CD8-positive, alpha-beta T cell (primary cell): ENCODE measurements at regions of chr15 and their contacts with region 1.

Region 1: DNA sequence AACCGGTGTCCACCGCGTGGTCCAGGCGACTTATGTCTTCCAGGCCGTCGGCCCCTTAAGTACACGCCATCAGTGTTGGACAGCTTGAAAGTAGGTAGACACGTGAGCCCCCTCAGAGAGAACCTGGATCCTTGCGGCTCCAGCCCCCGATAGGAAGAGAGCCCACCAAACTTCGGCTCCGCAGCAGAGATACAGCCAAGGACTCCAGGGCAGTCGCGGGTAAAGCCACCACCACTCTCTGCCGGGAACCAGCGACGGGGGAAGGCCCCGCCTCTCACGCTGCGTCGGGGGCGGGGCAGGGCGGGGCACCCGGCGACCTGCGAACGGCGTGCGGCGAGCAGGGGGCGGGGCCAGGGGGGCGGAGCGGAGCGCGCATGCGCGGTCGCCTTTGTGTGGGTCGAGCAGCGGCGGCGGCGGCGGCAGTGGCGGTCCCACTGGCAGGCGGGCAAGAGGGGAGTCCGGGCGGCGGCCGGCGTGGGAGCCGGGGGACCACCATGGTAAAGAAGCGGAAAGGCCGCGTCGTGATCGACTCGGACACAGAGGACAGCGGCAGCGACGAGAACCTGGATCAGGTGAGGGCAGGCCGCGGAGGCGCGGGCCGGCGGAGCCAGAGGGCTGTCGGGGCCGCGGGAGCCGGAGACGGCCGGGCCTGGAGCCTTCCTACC is at the start of gene RTF1:
- DNase-seq: peak; percentile 94 to 99 (median 98)
- ATAC-seq: peak; percentile 98
- H3K4me3 ChIP-seq: peak within 1 kb of the TSS; percentile 79 to 91
- H3K4me3 Mint-ChIP-seq: peak within 1 kb of the TSS; percentile 93
- H3K27ac ChIP-seq: peak within 1 kb of the TSS; percentile 64 to 76
- H3K27ac Mint-ChIP-seq: peak within 1 kb of the TSS; percentile 94
- H3K4me1 ChIP-seq: peaks cover 30% of the 10 kb centered on the region
- H3K4me1 Mint-ChIP-seq: peaks cover 43% of the 10 kb centered on the region
- H3K27me3 ChIP-seq: no peaks in the 10 kb centered on the region
- H3K27me3 Mint-ChIP-seq: no peaks in the 10 kb centered on the region
- CTCF ChIP-seq: no peak
- total RNA-seq, gene RTF1: 33.2 to 41.6 TPM

Region 2: DNA sequence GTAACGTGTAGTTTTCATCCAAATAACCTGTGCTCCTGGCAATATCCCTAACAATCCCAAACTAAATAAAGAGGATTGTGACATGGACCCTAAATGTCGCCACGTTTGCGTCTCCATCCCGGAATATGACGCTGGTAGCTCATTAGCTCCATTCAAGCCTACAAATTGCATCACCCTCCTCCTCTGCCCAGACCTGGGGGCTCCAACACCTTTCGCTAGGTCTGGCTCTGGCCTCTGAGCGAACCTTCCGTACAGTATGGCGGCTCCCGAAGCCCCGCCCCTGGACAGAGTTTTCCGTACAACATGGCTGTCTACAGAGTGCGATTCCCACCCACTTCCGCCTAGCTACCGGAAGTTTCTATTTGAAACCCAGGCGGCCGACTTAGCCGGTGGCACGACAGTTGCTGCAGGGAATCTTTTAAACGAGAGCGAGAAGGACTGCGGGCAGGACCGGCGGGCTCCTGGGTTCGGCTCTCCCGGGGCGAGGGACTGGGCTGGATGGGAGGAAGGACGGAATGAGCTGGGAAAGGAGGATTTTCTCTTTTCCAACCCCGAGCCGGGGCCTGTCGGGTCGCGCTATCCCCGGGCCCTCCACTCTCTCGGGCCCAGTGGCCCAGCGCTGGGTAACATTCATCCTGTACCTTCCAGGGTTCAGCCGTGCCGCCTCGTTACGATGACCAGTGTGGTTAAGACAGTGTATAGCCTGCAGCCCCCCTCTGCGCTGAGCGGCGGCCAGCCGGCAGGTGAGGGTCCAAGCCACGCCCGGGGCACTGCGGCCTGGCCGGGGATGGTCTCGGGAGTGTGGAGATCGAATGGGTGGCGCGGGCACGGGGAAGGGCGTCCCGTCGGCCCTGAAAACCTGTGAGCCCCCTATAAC is 1034.1 kb before region 1 on chr15 and contains the start of gene KNSTRN:
- CTCF ChIA-PET with region 1: no interaction called
- POLR2A ChIA-PET with region 1: no interaction called
- intact Hi-C with region 1: loop called in 1 of 2 experiments (anchors 5 kb)
- DNase-seq: peak; percentile 84 to 95 (median 93)
- ATAC-seq: peak; percentile 99
- H3K4me3 ChIP-seq: peak within 1 kb of the TSS; percentile 73 to 93
- H3K4me3 Mint-ChIP-seq: peak within 1 kb of the TSS; percentile 99
- H3K27ac ChIP-seq: peak within 1 kb of the TSS in 1 of 2 experiments; percentile 54
- H3K27ac Mint-ChIP-seq: peak within 1 kb of the TSS; percentile 81
- H3K4me1 ChIP-seq: peaks cover 13% of the 10 kb centered on the region
- H3K4me1 Mint-ChIP-seq: peaks cover 16% of the 10 kb centered on the region
- H3K27me3 ChIP-seq: no peaks in the 10 kb centered on the region
- H3K27me3 Mint-ChIP-seq: no peaks in the 10 kb centered on the region
- CTCF ChIP-seq: no peak
- total RNA-seq, gene KNSTRN: 3.8 to 5.4 TPM

Region 3: GRCh38 chr15:41230650-41231533 is 186.0 kb before region 1 on chr15 and contains the starts of genes CHP1 and EXD1:
- CTCF ChIA-PET with region 1: no interaction called
- POLR2A ChIA-PET with region 1: no interaction called
- intact Hi-C with region 1: loop called in 1 of 2 experiments (anchors 2 kb)
- DNase-seq: peak; percentile 89 to 97 (median 94)
- ATAC-seq: peak; percentile 95
- H3K4me3 ChIP-seq: peak within 1 kb of the TSS; percentile 83 to 89
- H3K4me3 Mint-ChIP-seq: peak within 1 kb of the TSS; percentile 89
- H3K27ac ChIP-seq: peak within 1 kb of the TSS; percentile 74 to 85
- H3K27ac Mint-ChIP-seq: peak within 1 kb of the TSS; percentile 90
- H3K4me1 ChIP-seq: peaks cover 27% of the 10 kb centered on the region
- H3K4me1 Mint-ChIP-seq: peaks cover 37% of the 10 kb centered on the region
- H3K27me3 ChIP-seq: no peaks in the 10 kb centered on the region
- H3K27me3 Mint-ChIP-seq: no peaks in the 10 kb centered on the region
- CTCF ChIP-seq: peak; percentile 99
- total RNA-seq, gene CHP1: 25.6 to 28.9 TPM
- total RNA-seq, gene EXD1: not detected

Region 4: GRCh38 chr15:41331833-41332787 is 84.8 kb before region 1 on chr15 and contains the start of gene OIP5:
- CTCF ChIA-PET with region 1: no interaction called
- POLR2A ChIA-PET with region 1: no interaction called
- intact Hi-C with region 1: loop called (anchors 1 kb)
- DNase-seq: peak; percentile 95 to 100 (median 96)
- ATAC-seq: peak; percentile 96
- H3K4me3 ChIP-seq: peak within 1 kb of the TSS; percentile 84 to 94
- H3K4me3 Mint-ChIP-seq: peak within 1 kb of the TSS; percentile 97
- H3K27ac ChIP-seq: peak within 1 kb of the TSS; percentile 46 to 63
- H3K27ac Mint-ChIP-seq: peak within 1 kb of the TSS; percentile 87
- H3K4me1 ChIP-seq: peaks cover 14% of the 10 kb centered on the region
- H3K4me1 Mint-ChIP-seq: peaks cover 30% of the 10 kb centered on the region
- H3K27me3 ChIP-seq: no peaks in the 10 kb centered on the region
- H3K27me3 Mint-ChIP-seq: no peaks in the 10 kb centered on the region
- CTCF ChIP-seq: peak; percentile 58
- total RNA-seq, gene OIP5: not detected

Region 5: GRCh38 chr15:41493205-41493901 is 76.5 kb after region 1 on chr15 and contains the start of gene ITPKA:
- CTCF ChIA-PET with region 1: no interaction called
- POLR2A ChIA-PET with region 1: no interaction called
- intact Hi-C with region 1: loop called (anchors 2 to 5 kb)
- DNase-seq: peak; percentile 38 to 87 (median 74)
- ATAC-seq: peak; percentile 82
- H3K4me3 ChIP-seq: peak within 1 kb of the TSS; percentile 64 to 75
- H3K4me3 Mint-ChIP-seq: peak within 1 kb of the TSS; percentile 79
- H3K27ac ChIP-seq: no peak within 1 kb of the TSS
- H3K27ac Mint-ChIP-seq: no peak within 1 kb of the TSS
- H3K4me1 ChIP-seq: peaks cover 31% of the 10 kb centered on the region
- H3K4me1 Mint-ChIP-seq: peaks cover 15% of the 10 kb centered on the region
- H3K27me3 ChIP-seq: peaks cover 33 to 54% of the 10 kb centered on the region in 2 experiments
- H3K27me3 Mint-ChIP-seq: peaks cover 38% of the 10 kb centered on the region
- CTCF ChIP-seq: no peak
- total RNA-seq, gene ITPKA: 0.50 TPM in 1 of 2 experiments, not detected in the other

Region 6: GRCh38 chr15:41634072-41634626 is 217.3 kb after region 1 on chr15:
- CTCF ChIA-PET with region 1: no interaction called
- POLR2A ChIA-PET with region 1: no interaction called
- intact Hi-C with region 1: no loop called
- DNase-seq: no peak
- ATAC-seq: no peak
- H3K4me3 ChIP-seq: no peak overlapping the region
- H3K4me3 Mint-ChIP-seq: no peak overlapping the region
- H3K27ac ChIP-seq: no peak overlapping the region
- H3K27ac Mint-ChIP-seq: no peak overlapping the region
- H3K4me1 ChIP-seq: no peaks in the 10 kb centered on the region
- H3K4me1 Mint-ChIP-seq: peaks cover 4% of the 10 kb centered on the region
- H3K27me3 ChIP-seq: no peaks in the 10 kb centered on the region
- H3K27me3 Mint-ChIP-seq: no peaks in the 10 kb centered on the region
- CTCF ChIP-seq: no peak

Region 7: DNA sequence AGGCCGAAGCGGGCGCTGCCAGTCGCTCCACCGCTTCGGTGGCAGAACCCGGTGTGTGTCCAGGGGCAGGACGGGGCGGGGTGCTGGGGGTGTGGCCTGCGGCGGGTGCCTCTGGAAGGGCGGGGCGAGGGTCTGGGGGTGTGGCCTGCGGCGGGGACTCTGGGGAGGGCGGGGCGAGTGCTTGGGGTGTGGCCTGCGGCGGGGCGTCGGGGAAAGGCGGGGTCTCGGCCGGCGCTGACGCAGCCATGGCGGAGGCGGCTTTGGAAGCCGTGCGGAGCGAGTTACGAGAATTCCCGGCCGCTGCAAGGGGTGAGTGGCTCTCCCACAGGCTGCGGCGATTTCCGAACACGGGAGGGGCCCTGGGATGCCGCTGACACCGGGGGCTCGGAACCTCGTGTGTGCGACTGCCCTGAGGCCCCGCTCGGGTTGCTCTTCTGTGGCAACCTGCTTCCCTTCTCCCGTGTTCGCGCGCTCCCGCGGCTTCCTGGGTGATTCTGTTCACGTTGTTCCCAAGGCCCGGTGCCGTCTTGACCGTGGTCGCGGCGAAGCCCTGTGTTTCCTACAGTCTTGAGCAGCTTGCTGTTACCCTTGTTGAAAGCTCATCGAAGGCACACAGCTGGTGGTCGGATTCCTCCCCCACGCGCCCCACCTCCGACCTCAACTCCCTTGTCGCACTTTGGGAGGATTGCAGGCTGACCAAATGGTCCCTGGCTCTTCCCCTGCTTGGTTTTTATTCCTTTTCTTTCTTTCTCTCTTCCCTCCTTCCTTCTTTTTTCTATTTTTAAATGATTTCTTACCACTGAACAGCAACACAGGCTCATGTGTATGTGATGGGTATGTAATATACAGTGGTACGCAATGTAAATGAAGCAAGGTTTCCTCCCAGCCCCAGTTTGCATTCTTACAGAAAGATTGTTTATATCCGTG is 411.3 kb after region 1 on chr15 and contains the start of gene JMJD7:
- CTCF ChIA-PET with region 1: no interaction called
- POLR2A ChIA-PET with region 1: no interaction called
- intact Hi-C with region 1: loop called in 1 of 2 experiments (anchors 5 kb)
- DNase-seq: peak; percentile 93 to 98 (median 95)
- ATAC-seq: peak; percentile 97
- H3K4me3 ChIP-seq: peak within 1 kb of the TSS; percentile 93 to 95
- H3K4me3 Mint-ChIP-seq: peak within 1 kb of the TSS; percentile 83
- H3K27ac ChIP-seq: peak within 1 kb of the TSS; percentile 74 to 87
- H3K27ac Mint-ChIP-seq: peak within 1 kb of the TSS; percentile 87
- H3K4me1 ChIP-seq: peaks cover 35% of the 10 kb centered on the region
- H3K4me1 Mint-ChIP-seq: peaks cover 44% of the 10 kb centered on the region
- H3K27me3 ChIP-seq: no peaks in the 10 kb centered on the region
- H3K27me3 Mint-ChIP-seq: no peaks in the 10 kb centered on the region
- CTCF ChIP-seq: no peak
- total RNA-seq, gene JMJD7: 27.5 to 38.3 TPM